GM10248 (cell line): ENCODE measurements at regions of chr2 and their contacts with region 1.

Region 1: GRCh38 chr2:64661741-64662169 is 8.0 kb upstream of the SERTAD2 start:
- DNase-seq: peak; percentile 40
- CTCF ChIP-seq: no peak

Region 2: GRCh38 chr2:64404002-64404731 is 257.6 kb before region 1 on chr2:
- CTCF ChIA-PET with region 1: no interaction called
- POLR2A ChIA-PET with region 1: no interaction called
- DNase-seq: no peak
- CTCF ChIP-seq: no peak

Region 3: GRCh38 chr2:64675860-64676259 is 14.1 kb after region 1 on chr2:
- CTCF ChIA-PET with region 1: interaction called, 12 read pairs
- POLR2A ChIA-PET with region 1: no interaction called
- DNase-seq: no peak
- CTCF ChIP-seq: no peak

Region 4: GRCh38 chr2:64685438-64685837 is 23.7 kb after region 1 on chr2:
- CTCF ChIA-PET with region 1: interaction called, 10 read pairs
- POLR2A ChIA-PET with region 1: no interaction called
- DNase-seq: no peak
- CTCF ChIP-seq: no peak